ENCODE measurements at regions of chr9 and their contacts with region 1.

Region 1: DNA sequence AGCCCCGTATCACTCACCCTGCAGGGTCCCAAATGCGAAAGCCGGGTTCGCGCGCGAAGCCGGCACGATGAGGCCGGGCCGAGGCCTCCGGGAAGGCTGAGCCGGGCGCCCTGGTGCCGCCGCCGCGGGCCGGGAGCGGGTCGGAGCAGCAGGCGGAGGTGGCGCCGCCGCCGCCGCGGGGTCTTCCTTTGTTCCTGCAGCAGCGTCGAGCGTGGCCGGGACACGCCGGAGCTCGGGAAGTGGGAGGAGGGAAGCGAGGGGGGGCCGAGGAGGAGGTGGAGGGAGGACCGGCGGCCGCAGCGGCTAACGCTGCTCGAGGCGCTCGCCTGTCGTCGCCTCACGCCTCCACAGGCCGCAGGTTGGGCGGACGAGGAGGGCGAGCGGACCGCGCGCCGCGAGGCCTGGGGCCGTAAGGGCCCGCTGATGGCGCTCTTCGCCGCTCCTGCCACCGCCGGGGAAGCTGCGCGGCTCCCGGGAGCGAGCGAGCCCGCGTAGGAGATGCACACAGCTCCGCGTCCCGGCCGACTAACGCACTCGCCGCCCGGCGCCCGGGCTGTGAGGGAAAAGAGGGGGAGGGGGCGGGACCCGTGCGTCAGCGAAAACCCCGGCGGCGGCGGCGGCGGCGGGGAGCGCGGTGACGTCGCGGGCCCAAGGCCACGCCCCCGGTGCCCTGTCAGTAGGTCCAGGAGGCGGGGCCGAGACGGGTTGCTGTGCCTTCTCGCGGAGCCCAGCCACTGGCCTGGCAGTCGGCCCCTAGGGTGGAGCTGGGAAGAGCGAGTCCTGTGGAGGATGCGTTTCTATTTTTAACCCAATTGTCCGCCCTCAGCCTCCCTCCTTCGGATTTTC is at the start of gene ZFAND5:
- DNase-seq: peak; percentile 98 to 99
- ATAC-seq: peak; percentile 90 to 99 (median 95)
- H3K4me3 ChIP-seq: peak within 1 kb of the TSS; percentile 63 to 94 (median 88)
- H3K27ac ChIP-seq: peak within 1 kb of the TSS; percentile 98 to 100 (median 100)
- H3K4me1 ChIP-seq: peaks cover under 1 to 49% (median 34%) of the 10 kb centered on the region in 9 donors
- H3K27me3 ChIP-seq: no peaks in the 10 kb centered on the region
- CTCF ChIP-seq: peak in 2 of 9 donors; percentile 10 to 17
- total RNA-seq, gene ZFAND5: 158 to 280 (median 230) TPM

Region 2: GRCh38 chr9:71768388-71769174 is 596.3 kb before region 1 on chr9 and contains the start of gene CEMIP2:
- intact Hi-C with region 1: loop called in 1 of 10 experiments (anchors 5 kb)
- DNase-seq: peak; percentile 90 to 91
- ATAC-seq: peak; percentile 89 to 98 (median 92)
- H3K4me3 ChIP-seq: peak within 1 kb of the TSS; percentile 50 to 96 (median 88)
- H3K27ac ChIP-seq: peak within 1 kb of the TSS; percentile 92 to 99 (median 98)
- H3K4me1 ChIP-seq: peaks cover 4 to 53% (median 25%) of the 10 kb centered on the region in 9 donors
- H3K27me3 ChIP-seq: peaks cover 0 to 5% (median 0%) of the 10 kb centered on the region in 7 donors
- CTCF ChIP-seq: peak in 7 of 9 donors; percentile 14 to 67 (median 59)
- total RNA-seq, gene CEMIP2: 4.7 to 34.9 (median 11.0) TPM

Region 3: GRCh38 chr9:72292256-72292682 is 72.6 kb before region 1 on chr9:
- intact Hi-C with region 1: loop called in 2 of 10 experiments (anchors 5 kb)
- DNase-seq: no peak
- ATAC-seq: peak in 3 of 8 donors; percentile 30 to 51 (median 44)
- H3K4me3 ChIP-seq: no peak overlapping the region
- H3K27ac ChIP-seq: peak overlapping the region in 1 of 10 donors; percentile 68
- H3K4me1 ChIP-seq: peaks cover 0 to 33% (median 8%) of the 10 kb centered on the region in 9 donors
- H3K27me3 ChIP-seq: no peaks in the 10 kb centered on the region
- CTCF ChIP-seq: peak; percentile 44 to 79 (median 65)

Region 4: GRCh38 chr9:72315510-72316311 is 49.2 kb before region 1 on chr9:
- intact Hi-C with region 1: loop called in 2 of 10 experiments (anchors 2 to 10 kb)
- DNase-seq: no peak
- ATAC-seq: peak in 7 of 8 donors; percentile 28 to 63 (median 48)
- H3K4me3 ChIP-seq: peak overlapping the region in 3 of 10 donors; percentile 5 to 42 (median 12)
- H3K27ac ChIP-seq: peak overlapping the region in 2 of 10 donors; percentile 32 to 41
- H3K4me1 ChIP-seq: peaks cover 0 to 34% (median 17%) of the 10 kb centered on the region in 9 donors
- H3K27me3 ChIP-seq: no peaks in the 10 kb centered on the region
- CTCF ChIP-seq: no peak

Region 5: DNA sequence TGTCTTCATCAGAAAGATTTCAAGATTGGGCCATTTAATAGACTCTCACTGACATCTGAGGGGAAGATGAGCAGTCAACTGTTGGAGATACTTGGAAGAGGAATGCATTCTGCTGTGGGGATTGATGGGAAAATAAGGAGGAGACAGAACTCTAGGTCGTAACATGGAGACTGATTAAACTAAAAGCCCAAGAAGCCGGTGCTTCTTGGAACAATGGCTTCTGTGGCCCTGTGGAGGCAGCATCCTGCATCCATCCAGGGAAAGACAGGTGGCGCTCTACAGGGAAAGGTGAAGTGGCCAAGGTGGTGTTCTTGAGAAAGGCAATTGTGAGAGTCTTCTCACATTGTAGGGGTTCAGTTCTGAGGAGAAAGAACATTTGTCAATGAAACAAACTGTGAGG is 31.2 kb before region 1 on chr9:
- intact Hi-C with region 1: no loop called
- DNase-seq: no peak
- ATAC-seq: no peak
- H3K4me3 ChIP-seq: no peak overlapping the region
- H3K27ac ChIP-seq: no peak overlapping the region
- H3K4me1 ChIP-seq: no peaks in the 10 kb centered on the region
- H3K27me3 ChIP-seq: no peaks in the 10 kb centered on the region
- CTCF ChIP-seq: peak in 2 of 9 donors; percentile 3 to 14

Region 6: GRCh38 chr9:72379121-72379520 is 14.2 kb after region 1 on chr9:
- intact Hi-C with region 1: no loop called
- DNase-seq: no peak
- ATAC-seq: no peak
- H3K4me3 ChIP-seq: no peak overlapping the region
- H3K27ac ChIP-seq: no peak overlapping the region
- H3K4me1 ChIP-seq: no peaks in the 10 kb centered on the region
- H3K27me3 ChIP-seq: no peaks in the 10 kb centered on the region
- CTCF ChIP-seq: no peak

Region 7: DNA sequence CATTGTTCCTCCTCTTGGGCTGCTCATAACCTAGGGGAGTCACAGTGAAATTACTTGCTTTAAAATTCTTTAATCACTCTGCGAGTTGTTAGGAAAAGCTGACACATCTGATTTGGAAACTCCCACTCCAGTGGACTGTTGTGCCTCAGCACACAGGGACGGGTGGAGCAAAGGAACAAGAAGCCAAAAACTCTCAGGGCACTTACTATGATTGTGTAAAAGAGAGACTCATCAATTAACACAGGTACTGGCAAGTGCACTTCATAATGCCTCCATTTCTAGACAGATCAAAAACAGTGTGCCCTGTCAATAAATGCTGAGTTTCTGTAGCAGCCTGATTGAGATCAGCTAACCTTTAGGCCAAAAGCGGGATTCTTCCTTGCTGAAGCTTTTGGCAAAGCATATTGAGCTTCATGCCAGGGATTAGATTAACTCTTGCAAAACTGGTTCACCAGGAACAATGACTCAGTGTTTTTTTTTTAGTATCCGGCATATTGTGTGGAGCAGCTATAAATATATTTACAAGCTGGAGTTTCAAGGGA is 212.4 kb after region 1 on chr9:
- intact Hi-C with region 1: loop called in 6 of 10 experiments (anchors 1 to 10 kb)
- DNase-seq: peak in 1 of 2 donors; percentile 41
- ATAC-seq: peak; percentile 63 to 88 (median 78)
- H3K4me3 ChIP-seq: peak overlapping the region in 6 of 10 donors; percentile 2 to 47 (median 26)
- H3K27ac ChIP-seq: peak overlapping the region in 9 of 10 donors; percentile 37 to 87 (median 76)
- H3K4me1 ChIP-seq: peaks cover 0 to 58% (median 40%) of the 10 kb centered on the region in 9 donors
- H3K27me3 ChIP-seq: no peaks in the 10 kb centered on the region
- CTCF ChIP-seq: no peak

Region 8: DNA sequence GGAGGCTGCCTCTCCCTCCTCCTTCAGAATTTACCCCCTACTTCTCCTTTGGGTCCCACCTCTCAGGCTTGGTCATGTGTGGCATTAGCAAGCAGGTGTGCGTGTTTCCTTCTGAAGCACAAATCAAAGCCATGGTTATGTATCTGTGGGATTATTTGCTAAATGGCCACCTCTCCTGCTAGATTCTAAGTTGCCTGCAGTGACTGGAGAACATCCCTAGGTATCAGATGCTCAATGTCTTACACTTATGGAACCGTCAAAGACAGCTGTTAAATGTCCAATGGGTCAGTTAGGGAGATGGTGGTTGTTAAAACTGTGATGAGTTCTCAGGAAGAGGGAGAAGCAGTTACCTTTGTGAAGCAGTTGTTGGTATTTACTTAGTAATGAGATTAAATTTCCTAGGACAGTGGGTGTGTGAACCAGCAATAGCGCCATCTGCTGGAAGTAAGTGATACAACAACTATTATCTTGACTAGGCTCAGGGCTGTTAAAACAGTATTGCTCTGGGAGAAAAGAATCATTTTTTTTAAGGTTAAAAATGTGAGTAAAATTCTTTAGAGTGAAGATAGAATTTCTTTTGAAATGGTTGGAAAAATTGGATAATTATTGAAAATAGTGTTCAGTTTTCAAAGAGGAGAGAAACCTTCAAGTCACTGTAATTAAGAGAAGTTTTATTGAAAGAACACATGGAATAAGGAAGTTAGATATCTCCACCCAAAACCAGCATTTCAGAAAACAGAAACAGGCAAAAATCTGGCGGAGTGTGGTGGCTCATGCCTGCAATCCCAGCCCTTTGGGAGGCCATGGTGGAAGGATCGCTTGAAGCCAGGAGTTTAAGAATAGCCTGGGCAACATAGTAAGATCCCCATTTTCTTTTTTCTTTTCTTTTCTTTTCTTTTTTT is 227.9 kb after region 1 on chr9:
- intact Hi-C with region 1: loop called in 9 of 10 experiments (anchors 5 to 10 kb)
- DNase-seq: peak in 1 of 2 donors; percentile 30
- ATAC-seq: peak; percentile 77 to 88 (median 80)
- H3K4me3 ChIP-seq: no peak overlapping the region
- H3K27ac ChIP-seq: peak overlapping the region in 3 of 10 donors; percentile 4 to 60 (median 57)
- H3K4me1 ChIP-seq: peaks cover 0 to 44% (median 5%) of the 10 kb centered on the region in 9 donors
- H3K27me3 ChIP-seq: no peaks in the 10 kb centered on the region
- CTCF ChIP-seq: peak; percentile 78 to 93 (median 88)

Measured in heart right ventricle (tissue), 16 donors.